RWPE1 (cell line): ENCODE measurements at regions of chr2 and their contacts with region 1.

Region 1: GRCh38 chr2:70948337-70949003 is 12.8 kb downstream of the ATP6V1B1 start:
- DNase-seq: peak; percentile 80
- H3K27ac ChIP-seq: no peak overlapping the region
- CTCF ChIP-seq: peak; percentile 93

Region 2: GRCh38 chr2:70733646-70734180 is 214.8 kb before region 1 on chr2:
- CTCF ChIA-PET with region 1: no interaction called
- POLR2A ChIA-PET with region 1: no interaction called
- DNase-seq: no peak
- H3K27ac ChIP-seq: no peak overlapping the region
- CTCF ChIP-seq: no peak

Region 3: DNA sequence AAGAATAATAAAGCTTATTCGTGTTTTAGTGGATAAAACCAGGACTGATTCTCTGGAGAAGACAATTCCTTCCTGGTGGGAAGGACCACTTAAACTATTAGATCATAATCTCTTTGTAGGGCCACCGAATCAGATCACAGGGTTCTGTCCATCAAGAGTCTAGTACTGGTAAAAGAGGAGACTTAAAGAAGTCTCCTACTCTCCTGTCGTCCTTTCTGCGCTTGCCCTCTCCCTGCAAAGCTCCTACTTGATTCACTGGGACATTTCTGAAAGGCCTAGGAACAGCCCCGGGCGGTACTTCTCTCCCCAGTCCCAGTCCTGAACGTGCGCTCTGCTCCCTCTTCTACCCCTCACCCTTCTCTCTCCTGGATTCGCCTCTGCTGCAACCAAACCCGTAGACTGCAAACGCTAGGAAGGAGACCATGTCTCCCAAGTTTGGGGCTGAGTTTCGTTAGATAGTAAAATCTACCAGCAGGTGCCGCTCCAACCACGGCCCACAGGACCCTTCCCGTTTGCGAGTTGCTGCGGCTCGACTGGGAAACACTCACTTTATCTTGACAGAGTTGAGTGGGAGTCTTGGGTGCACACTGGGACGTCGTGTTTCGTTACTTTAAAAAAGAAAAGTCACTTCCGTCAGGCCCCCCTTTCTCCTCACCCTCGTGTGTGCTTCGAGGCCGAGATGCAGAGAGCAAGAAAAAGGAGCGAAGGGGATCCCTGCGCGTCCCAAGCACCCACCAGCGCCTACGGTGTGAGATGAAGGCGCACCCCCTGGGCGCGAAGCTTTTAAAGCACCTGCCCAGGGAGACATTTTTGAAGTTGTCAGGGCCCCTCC is 158.9 kb before region 1 on chr2:
- CTCF ChIA-PET with region 1: interaction called, 13 read pairs
- POLR2A ChIA-PET with region 1: no interaction called
- DNase-seq: peak; percentile 61
- H3K27ac ChIP-seq: no peak overlapping the region
- CTCF ChIP-seq: peak; percentile 60

Region 4: DNA sequence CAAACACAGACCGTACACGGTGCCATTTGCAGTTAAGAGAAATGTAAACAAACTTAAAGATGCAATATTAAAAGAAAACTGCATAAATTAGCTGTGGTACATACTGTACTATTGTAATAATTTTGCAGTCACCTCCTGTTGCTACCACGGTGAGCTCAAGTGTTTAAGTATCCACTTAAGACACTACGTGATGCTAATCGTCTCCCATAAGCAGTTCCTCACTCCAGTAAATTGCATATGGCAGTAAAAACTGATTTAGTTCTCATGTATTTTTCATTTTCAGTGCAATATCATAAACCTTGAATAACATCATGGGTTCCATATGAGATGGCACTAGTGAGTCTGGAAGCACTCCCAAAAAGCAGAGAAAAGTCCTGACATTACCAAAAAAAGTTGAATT is 142.5 kb before region 1 on chr2:
- CTCF ChIA-PET with region 1: no interaction called
- POLR2A ChIA-PET with region 1: no interaction called
- DNase-seq: no peak
- H3K27ac ChIP-seq: no peak overlapping the region
- CTCF ChIP-seq: no peak

Region 5: GRCh38 chr2:70861777-70862625 is 86.5 kb before region 1 on chr2:
- CTCF ChIA-PET with region 1: interaction called, 27 read pairs
- POLR2A ChIA-PET with region 1: no interaction called
- DNase-seq: peak; percentile 83
- H3K27ac ChIP-seq: no peak overlapping the region
- CTCF ChIP-seq: peak; percentile 97

Region 6: DNA sequence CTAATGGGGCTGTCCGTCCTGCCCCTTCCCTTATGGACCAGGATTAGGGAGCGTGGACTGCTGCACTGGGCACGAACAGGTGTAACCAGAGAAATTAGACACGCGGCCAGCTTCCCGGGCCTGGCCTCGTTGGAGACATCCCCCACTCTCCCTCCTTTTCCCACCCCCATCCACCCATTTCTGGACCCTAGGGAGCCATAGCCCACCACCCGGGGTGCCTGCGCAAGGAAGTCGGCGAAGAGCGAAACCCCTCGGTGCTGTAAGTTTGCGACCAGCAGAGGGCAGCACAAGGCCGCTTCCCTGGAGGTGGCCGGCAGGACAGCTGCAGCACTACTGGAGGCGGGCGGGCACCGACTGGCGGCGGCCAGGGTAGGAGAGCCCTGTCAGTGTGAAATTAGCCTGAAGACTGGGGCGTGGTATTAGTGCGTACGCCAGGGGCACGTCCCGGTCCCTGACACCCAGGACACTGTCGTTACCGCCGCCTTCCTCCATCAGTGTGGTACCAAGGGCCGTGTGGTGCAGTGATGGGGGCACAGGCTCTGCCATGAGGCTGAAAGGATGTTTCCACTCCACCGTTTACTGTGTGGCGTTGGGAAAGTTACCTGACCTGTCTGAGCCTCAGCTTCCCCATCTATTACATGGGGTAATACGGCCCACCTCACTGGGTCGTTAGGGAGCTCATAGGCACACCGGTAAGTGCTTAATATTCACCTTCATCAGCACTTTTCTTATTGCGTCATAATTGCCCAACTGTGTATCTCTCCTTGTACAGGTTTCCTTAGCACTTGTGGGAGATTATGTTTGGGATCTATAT is 76.9 kb before region 1 on chr2:
- CTCF ChIA-PET with region 1: interaction called, 44 read pairs
- POLR2A ChIA-PET with region 1: no interaction called
- DNase-seq: peak; percentile 78
- H3K27ac ChIP-seq: no peak overlapping the region
- CTCF ChIP-seq: peak; percentile 88

Region 7: GRCh38 chr2:70964596-70965386 is 16.3 kb after region 1 on chr2:
- CTCF ChIA-PET with region 1: interaction called, 12 read pairs
- POLR2A ChIA-PET with region 1: no interaction called
- DNase-seq: peak; percentile 58
- H3K27ac ChIP-seq: no peak overlapping the region
- CTCF ChIP-seq: peak; percentile 84

Region 8: DNA sequence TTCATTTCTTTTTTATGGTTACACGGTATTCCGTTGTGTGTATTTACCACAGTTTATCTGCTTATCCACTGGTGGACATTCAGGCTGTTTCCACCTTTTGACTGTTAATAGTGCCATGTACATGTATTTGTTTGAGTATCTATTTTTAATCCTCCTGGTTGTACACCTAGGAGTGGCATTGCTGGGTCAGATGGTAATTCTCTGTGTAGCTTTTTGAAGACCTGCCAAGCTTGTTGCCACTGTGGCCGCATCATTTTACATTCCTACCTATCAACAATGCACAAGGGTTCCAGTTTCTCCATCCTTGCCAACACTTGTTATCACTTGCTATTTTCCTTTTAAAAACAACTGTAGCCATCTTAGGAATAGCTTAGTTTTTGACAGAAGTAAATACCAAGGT is 195.3 kb after region 1 on chr2:
- CTCF ChIA-PET with region 1: no interaction called
- POLR2A ChIA-PET with region 1: no interaction called
- DNase-seq: no peak
- H3K27ac ChIP-seq: no peak overlapping the region
- CTCF ChIP-seq: no peak